Transverse colon (tissue), 4 donors: ENCODE measurements at regions of chr2 and their contacts with region 1.

Region 1: DNA sequence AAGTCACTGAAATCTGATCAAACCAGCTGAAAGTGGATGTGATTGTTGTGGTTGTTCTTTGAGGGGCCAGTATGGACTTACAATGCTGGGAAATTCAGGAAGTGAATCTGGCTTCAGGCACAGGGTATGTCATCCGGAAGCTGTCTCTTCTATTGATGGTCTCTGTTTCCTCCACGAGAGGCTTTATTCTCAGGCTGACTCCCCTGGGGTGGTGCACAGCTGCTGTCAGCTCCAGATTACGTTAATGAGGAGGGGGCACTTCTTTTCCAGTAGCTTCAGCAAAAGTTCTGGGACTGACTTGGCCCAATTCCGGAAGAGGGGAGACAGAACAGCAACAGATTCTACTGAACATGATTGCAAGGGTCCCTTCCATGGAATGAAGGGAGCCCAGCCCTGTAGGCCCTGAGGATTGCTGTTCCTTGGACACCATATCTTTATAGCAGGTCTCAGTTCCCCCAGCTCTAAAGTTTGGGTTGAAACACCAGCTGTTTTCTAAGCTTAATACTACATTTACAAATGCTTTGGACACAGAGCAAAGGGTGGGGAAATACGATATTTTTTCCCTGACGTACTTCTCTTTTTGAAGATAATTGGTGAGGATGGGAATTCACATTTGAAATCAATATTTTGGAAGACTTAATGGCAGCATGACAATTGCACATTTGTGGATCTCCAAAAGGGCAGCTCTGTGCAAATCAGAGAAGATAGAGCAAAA is 400.9 kb downstream of the TSN start:
- DNase-seq: no peak
- H3K4me3 ChIP-seq: no peak overlapping the region
- H3K27ac ChIP-seq: no peak overlapping the region
- H3K4me1 ChIP-seq: no peaks in the 10 kb centered on the region
- H3K27me3 ChIP-seq: no peaks in the 10 kb centered on the region
- CTCF ChIP-seq: no peak
- EP300 ChIP-seq: no peak
- POLR2A ChIP-seq: no peak

Region 2: DNA sequence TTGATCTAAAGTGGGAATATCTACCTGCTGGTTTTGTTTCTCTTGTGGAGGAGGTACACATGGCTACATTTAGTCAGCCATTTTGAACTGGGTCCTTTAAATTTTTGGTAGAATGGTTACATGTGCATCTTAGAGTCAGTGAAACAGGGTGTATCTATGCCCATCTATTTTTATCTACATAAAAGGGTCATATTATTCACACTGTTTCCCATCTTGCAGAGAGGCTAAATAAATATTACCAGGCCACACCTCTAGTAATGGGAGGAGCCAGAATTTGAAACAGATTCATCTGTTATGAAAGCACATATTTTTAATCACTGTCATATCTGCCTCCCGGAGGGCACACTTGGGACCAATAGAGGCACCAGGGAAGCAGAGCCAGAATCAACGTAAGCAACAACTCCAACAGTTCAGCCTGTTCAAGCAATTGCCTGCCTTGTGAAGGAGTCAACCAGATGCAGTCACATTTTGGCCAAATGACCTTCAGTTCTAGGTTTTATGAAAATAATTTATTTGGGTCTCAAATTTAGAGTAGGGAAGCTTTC is 24.1 kb before region 1 on chr2:
- in situ Hi-C with region 1: no loop called
- intact Hi-C with region 1: loop called (anchors 1 kb)
- DNase-seq: no peak
- H3K4me3 ChIP-seq: no peak overlapping the region
- H3K27ac ChIP-seq: no peak overlapping the region
- H3K4me1 ChIP-seq: no peaks in the 10 kb centered on the region
- H3K27me3 ChIP-seq: no peaks in the 10 kb centered on the region
- CTCF ChIP-seq: no peak
- EP300 ChIP-seq: no peak
- POLR2A ChIP-seq: no peak